CD4-positive, alpha-beta T cell (primary cell): ENCODE measurements at regions of chr15 and their contacts with region 1.

Region 1: GRCh38 chr15:70097337-70098169 is at the start of gene TLE3:
- DNase-seq: peak; percentile 96 to 99 (median 98)
- ATAC-seq: peak; percentile 54
- H3K4me3 ChIP-seq: peak within 1 kb of the TSS; percentile 97
- H3K4me3 Mint-ChIP-seq: peak within 1 kb of the TSS; percentile 96
- H3K27ac ChIP-seq: peak within 1 kb of the TSS; percentile 90
- H3K27ac Mint-ChIP-seq: peak within 1 kb of the TSS; percentile 95
- H3K4me1 ChIP-seq: peaks cover 70% of the 10 kb centered on the region
- H3K4me1 Mint-ChIP-seq: peaks cover 69% of the 10 kb centered on the region
- H3K27me3 ChIP-seq: no peaks in the 10 kb centered on the region
- H3K27me3 Mint-ChIP-seq: peaks cover 9% of the 10 kb centered on the region
- CTCF ChIP-seq: peak; percentile 61
- total RNA-seq, gene TLE3: 159 to 167 TPM

Region 2: DNA sequence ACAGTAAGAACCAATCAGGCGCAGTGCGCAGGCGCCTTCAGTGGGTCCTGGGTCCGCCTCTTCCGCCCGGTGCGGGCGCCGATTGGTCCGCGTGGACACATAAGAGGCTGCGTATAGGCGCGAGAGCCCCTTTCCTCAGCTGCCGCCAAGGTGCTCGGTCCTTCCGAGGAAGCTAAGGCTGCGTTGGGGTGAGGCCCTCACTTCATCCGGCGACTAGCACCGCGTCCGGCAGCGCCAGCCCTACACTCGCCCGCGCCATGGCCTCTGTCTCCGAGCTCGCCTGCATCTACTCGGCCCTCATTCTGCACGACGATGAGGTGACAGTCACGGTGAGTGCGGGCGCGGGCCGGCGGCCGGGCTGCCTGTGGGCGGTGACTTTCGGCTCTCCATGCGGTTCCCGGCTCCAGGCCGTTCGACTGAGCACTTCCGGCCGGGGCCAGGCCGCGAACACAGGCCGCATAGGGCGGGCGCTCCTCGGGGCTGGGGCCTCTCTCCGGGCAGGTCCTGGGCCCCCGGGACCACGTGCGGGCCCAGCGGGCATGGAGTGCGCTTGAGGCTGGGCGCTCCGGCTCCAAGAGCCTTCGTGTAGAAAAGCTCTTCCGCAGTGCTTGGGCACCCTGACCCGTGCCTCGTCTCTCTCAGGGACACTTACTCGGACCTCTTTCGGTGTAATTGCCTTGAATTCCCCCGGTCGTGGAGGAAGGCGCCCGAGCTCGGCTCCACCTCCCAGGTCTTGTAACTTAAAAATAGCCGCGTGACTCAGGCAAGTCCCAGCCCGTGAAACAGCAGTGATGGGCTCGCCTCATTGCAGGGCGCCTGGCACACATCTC is 644.6 kb before region 1 on chr15 and contains the start of gene RPLP1:
- CTCF ChIA-PET with region 1: no interaction called
- POLR2A ChIA-PET with region 1: interaction called, 21 read pairs
- intact Hi-C with region 1: loop called in 1 of 2 experiments (anchors 5 kb)
- DNase-seq: peak; percentile 92 to 98 (median 96)
- ATAC-seq: peak; percentile 85
- H3K4me3 ChIP-seq: peak within 1 kb of the TSS; percentile 98
- H3K4me3 Mint-ChIP-seq: peak within 1 kb of the TSS; percentile 95
- H3K27ac ChIP-seq: peak within 1 kb of the TSS; percentile 78 to 91
- H3K27ac Mint-ChIP-seq: peak within 1 kb of the TSS; percentile 94
- H3K4me1 ChIP-seq: peaks cover 38% of the 10 kb centered on the region
- H3K4me1 Mint-ChIP-seq: peaks cover 55% of the 10 kb centered on the region
- H3K27me3 ChIP-seq: no peaks in the 10 kb centered on the region
- H3K27me3 Mint-ChIP-seq: no peaks in the 10 kb centered on the region
- CTCF ChIP-seq: no peak
- total RNA-seq, gene RPLP1: 2,527 to 2,615 TPM

Region 3: DNA sequence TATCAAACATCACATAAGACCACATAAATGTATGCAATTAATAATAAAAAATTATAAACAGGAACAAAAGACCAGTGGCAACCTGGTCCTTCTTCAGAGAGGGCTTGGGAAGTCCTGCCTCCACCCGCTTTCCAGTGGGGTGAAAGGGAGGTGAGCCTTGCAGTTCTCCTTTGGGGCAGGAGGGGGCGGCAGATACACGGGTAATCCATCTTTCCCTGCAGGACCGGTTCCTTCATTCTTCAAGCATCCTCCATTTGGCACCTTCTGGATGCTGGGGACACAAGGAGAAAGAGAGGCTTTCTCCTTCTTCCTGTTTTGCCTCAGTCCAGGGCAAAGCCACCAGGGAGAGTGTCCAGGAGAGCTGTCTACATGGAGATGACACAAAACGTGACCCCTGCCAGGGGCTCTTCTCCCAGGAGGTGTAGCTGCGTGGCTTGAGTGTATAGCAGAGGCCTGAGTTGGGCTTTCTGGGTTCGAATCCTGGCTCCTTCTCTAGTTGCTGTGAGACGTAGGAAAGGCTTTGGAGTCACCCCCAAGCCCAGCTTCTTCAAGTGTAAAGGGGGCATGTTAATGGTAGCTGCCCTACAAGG is 621.7 kb before region 1 on chr15:
- CTCF ChIA-PET with region 1: interaction called, 5 read pairs
- POLR2A ChIA-PET with region 1: no interaction called
- intact Hi-C with region 1: loop called in 1 of 2 experiments (anchors 2 kb)
- DNase-seq: peak; percentile 55 to 85 (median 70)
- ATAC-seq: peak; percentile 95
- H3K4me3 ChIP-seq: no peak overlapping the region
- H3K4me3 Mint-ChIP-seq: no peak overlapping the region
- H3K27ac ChIP-seq: no peak overlapping the region
- H3K27ac Mint-ChIP-seq: no peak overlapping the region
- H3K4me1 ChIP-seq: peaks cover 10% of the 10 kb centered on the region
- H3K4me1 Mint-ChIP-seq: peaks cover 3% of the 10 kb centered on the region
- H3K27me3 ChIP-seq: peaks cover 0 to 2% of the 10 kb centered on the region in 2 experiments
- H3K27me3 Mint-ChIP-seq: no peaks in the 10 kb centered on the region
- CTCF ChIP-seq: peak; percentile 97

Region 4: DNA sequence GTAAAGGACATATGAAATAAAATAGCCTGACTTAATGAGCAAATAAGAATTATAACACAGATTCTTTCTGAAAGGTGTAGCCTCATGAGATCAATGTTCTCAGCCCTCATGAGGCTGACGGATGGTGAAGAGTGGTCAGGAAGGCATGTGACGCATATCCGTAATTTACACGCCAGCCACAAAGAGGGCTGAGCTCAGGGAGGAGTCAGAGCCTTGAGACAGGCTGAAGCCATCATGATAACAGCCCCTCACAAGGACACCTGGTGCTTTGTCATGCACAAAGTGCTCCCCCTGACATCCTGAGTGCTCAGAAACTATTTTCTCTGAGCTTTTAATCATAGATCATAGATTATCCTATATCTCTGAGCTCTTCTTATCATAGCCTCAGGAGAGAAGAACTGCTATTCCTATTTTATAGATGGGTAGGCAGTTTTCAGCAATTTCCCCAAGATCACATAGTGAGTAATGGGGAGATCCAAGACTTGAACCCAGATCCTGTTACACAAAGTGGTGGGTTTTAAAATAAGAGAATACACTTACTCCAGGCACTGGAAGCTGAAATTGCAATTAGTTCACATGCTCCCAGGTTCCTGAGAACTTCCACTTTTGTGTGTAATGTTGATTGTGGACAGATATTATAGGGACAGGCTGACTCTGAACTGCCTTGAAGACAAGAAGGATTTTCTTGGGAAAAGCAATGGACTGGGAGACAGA is 377.9 kb before region 1 on chr15:
- CTCF ChIA-PET with region 1: interaction called, 6 read pairs
- POLR2A ChIA-PET with region 1: interaction called, 65 read pairs
- intact Hi-C with region 1: loop called in 1 of 2 experiments (anchors 2 kb)
- DNase-seq: peak; percentile 22 to 91 (median 56)
- ATAC-seq: peak; percentile 81
- H3K4me3 ChIP-seq: no peak overlapping the region
- H3K4me3 Mint-ChIP-seq: peak overlapping the region; percentile 52
- H3K27ac ChIP-seq: peak overlapping the region in 1 of 2 donors; percentile 4
- H3K27ac Mint-ChIP-seq: peak overlapping the region; percentile 84
- H3K4me1 ChIP-seq: peaks cover 70% of the 10 kb centered on the region
- H3K4me1 Mint-ChIP-seq: peaks cover 76% of the 10 kb centered on the region
- H3K27me3 ChIP-seq: no peaks in the 10 kb centered on the region
- H3K27me3 Mint-ChIP-seq: no peaks in the 10 kb centered on the region
- CTCF ChIP-seq: no peak

Region 5: GRCh38 chr15:69760890-69761568 is 336.5 kb before region 1 on chr15:
- CTCF ChIA-PET with region 1: interaction called, 12 read pairs
- POLR2A ChIA-PET with region 1: interaction called, 160 read pairs
- intact Hi-C with region 1: loop called (anchors 2 kb)
- DNase-seq: peak; percentile 53 to 96 (median 76)
- ATAC-seq: peak; percentile 71
- H3K4me3 ChIP-seq: no peak overlapping the region
- H3K4me3 Mint-ChIP-seq: peak overlapping the region; percentile 71
- H3K27ac ChIP-seq: peak overlapping the region in 1 of 2 donors; percentile 51
- H3K27ac Mint-ChIP-seq: peak overlapping the region; percentile 80
- H3K4me1 ChIP-seq: peaks cover 64% of the 10 kb centered on the region
- H3K4me1 Mint-ChIP-seq: peaks cover 78% of the 10 kb centered on the region
- H3K27me3 ChIP-seq: no peaks in the 10 kb centered on the region
- H3K27me3 Mint-ChIP-seq: peaks cover 4% of the 10 kb centered on the region
- CTCF ChIP-seq: no peak

Region 6: GRCh38 chr15:69951907-69952555 is 145.5 kb before region 1 on chr15:
- CTCF ChIA-PET with region 1: no interaction called
- POLR2A ChIA-PET with region 1: no interaction called
- intact Hi-C with region 1: no loop called
- DNase-seq: no peak
- ATAC-seq: no peak
- H3K4me3 ChIP-seq: no peak overlapping the region
- H3K4me3 Mint-ChIP-seq: no peak overlapping the region
- H3K27ac ChIP-seq: no peak overlapping the region
- H3K27ac Mint-ChIP-seq: no peak overlapping the region
- H3K4me1 ChIP-seq: no peaks in the 10 kb centered on the region
- H3K4me1 Mint-ChIP-seq: no peaks in the 10 kb centered on the region
- H3K27me3 ChIP-seq: no peaks in the 10 kb centered on the region
- H3K27me3 Mint-ChIP-seq: no peaks in the 10 kb centered on the region
- CTCF ChIP-seq: no peak

Region 7: GRCh38 chr15:70259028-70259424 is 161.5 kb after region 1 on chr15:
- CTCF ChIA-PET with region 1: no interaction called
- POLR2A ChIA-PET with region 1: interaction called, 12 read pairs
- intact Hi-C with region 1: loop called in 1 of 2 experiments (anchors 2 kb)
- DNase-seq: peak in 13 of 14 experiments; percentile 37 to 85 (median 55)
- ATAC-seq: peak; percentile 69
- H3K4me3 ChIP-seq: peak overlapping the region; percentile 43
- H3K4me3 Mint-ChIP-seq: peak overlapping the region; percentile 62
- H3K27ac ChIP-seq: peak overlapping the region; percentile 40 to 67
- H3K27ac Mint-ChIP-seq: peak overlapping the region; percentile 84
- H3K4me1 ChIP-seq: peaks cover 50% of the 10 kb centered on the region
- H3K4me1 Mint-ChIP-seq: peaks cover 60% of the 10 kb centered on the region
- H3K27me3 ChIP-seq: no peaks in the 10 kb centered on the region
- H3K27me3 Mint-ChIP-seq: no peaks in the 10 kb centered on the region
- CTCF ChIP-seq: no peak